H1 (cell line): ENCODE measurements at regions of chr1 and their contacts with region 1.

Region 1: GRCh38 chr1:11967028-11967547 is 13.2 kb upstream of the MFN2 start:
- DNase-seq: peak; percentile 64 to 76
- H3K4me3 ChIP-seq: no peak overlapping the region
- H3K27ac ChIP-seq: no peak overlapping the region
- H3K4me1 ChIP-seq: no peaks in the 10 kb centered on the region
- H3K27me3 ChIP-seq: no peaks in the 10 kb centered on the region
- CTCF ChIP-seq: peak; percentile 68 to 98 (median 95)
- EP300 ChIP-seq: no peak
- POLR2A ChIP-seq: no peak
- RAD21 ChIP-seq: peak; percentile 95

Region 2: GRCh38 chr1:11838349-11839272 is 128.5 kb before region 1 on chr1:
- CTCF ChIA-PET with region 1: interaction called, 16 read pairs
- POLR2A ChIA-PET with region 1: no interaction called
- DNase-seq: peak; percentile 33 to 91
- H3K4me3 ChIP-seq: no peak overlapping the region
- H3K27ac ChIP-seq: no peak overlapping the region
- H3K4me1 ChIP-seq: no peaks in the 10 kb centered on the region
- H3K27me3 ChIP-seq: no peaks in the 10 kb centered on the region
- CTCF ChIP-seq: peak; percentile 96 to 100 (median 99)
- EP300 ChIP-seq: no peak
- POLR2A ChIP-seq: no peak
- RAD21 ChIP-seq: peak; percentile 98

Region 3: DNA sequence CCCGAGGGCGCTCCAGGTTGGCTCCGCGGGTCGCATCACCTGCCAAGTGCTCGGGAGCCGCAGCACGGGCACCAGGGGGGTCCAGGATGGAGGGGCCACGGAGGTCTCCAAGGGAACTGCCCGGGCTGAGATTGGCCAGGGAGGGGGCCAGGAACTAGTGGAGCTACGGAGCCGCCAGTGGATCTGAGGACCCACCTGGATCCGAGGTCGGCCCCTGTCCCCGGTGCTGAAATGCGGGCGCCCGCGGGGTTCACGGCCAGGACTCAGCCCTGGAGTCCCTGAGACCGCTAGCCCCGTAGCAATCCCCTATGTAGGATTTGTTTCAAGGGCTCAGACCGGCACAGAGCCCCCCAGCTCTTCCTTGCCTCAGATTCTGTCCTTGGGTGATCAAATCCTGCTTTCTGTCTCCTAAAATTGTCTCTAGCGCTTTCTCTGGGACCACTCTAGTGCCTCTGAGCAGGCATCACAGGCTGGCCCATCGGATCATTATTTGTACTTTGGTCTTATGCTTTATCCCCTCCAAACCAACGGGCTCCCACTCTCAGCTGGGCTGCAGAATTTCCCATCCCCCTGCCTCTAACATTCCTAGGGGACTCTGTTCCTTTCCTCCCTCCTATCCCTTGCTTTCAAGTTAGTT is 68.1 kb before region 1 on chr1:
- CTCF ChIA-PET with region 1: interaction called, 13 read pairs
- POLR2A ChIA-PET with region 1: no interaction called
- DNase-seq: peak in 1 of 2 experiments; percentile 93
- H3K4me3 ChIP-seq: peak overlapping the region in 2 of 4 experiments; percentile 32 to 35; a peak in 1 of 8 replicates
- H3K27ac ChIP-seq: no peak overlapping the region
- H3K4me1 ChIP-seq: peaks cover 0 to 2% (median 0%) of the 10 kb centered on the region in 4 experiments; a peak in 4 of 7 replicates
- H3K27me3 ChIP-seq: peaks cover 0 to 2% (median 0%) of the 10 kb centered on the region in 4 experiments; a peak in 1 of 7 replicates
- CTCF ChIP-seq: no peak
- EP300 ChIP-seq: no peak
- POLR2A ChIP-seq: no peak
- RAD21 ChIP-seq: no peak; a peak in 1 of 4 replicates

Region 4: DNA sequence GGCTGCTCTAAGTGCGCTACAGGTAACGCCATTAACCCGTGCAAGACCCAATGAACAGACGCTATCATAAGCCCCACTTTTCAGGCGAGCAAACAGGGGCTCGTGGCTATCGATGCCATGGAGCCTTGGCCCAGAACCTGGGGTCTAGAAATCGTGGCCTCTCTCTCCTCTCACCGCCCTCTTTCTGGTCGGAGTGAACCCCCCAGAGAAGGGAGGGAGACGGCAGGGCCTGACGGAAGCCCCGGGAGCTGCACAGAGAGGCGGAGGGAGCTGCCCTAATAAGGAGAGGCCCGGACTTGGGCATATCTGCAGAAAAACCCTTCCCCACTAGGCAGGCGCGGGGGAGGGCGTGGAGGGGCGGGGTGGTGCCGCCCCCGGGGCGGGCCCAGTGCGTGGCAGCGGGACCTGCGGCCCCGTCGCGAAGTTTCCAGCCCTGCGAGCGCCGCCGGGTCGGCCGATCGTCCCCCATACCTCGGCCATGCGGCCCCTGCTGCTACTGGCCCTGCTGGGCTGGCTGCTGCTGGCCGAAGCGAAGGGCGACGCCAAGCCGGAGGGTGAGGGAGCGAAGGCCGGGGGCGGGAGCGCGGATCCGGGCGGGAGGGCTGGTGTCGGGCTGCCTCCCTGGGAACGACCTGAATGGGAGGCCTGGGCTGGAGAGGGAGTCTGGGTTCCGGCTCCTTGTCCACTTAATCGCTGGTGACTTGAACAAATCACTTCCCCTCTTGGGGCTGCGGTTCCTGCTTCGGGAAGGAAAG is 32.6 kb before region 1 on chr1 and contains the start of gene PLOD1:
- CTCF ChIA-PET with region 1: interaction called, 13 read pairs
- POLR2A ChIA-PET with region 1: interaction called, 6 read pairs
- DNase-seq: peak; percentile 36 to 85
- H3K4me3 ChIP-seq: peak within 1 kb of the TSS; percentile 48 to 66 (median 64)
- H3K27ac ChIP-seq: peak within 1 kb of the TSS; percentile 84
- H3K4me1 ChIP-seq: peaks cover 0 to 16% (median 10%) of the 10 kb centered on the region in 4 experiments; a peak in 6 of 7 replicates
- H3K27me3 ChIP-seq: no peaks in the 10 kb centered on the region
- CTCF ChIP-seq: no peak
- EP300 ChIP-seq: no peak
- POLR2A ChIP-seq: peak in 1 of 2 experiments; percentile 92; a peak in 2 of 3 replicates
- RAD21 ChIP-seq: no peak
- total RNA-seq, gene PLOD1: 44.9 and 53.4 TPM in 2 replicates

Region 5: DNA sequence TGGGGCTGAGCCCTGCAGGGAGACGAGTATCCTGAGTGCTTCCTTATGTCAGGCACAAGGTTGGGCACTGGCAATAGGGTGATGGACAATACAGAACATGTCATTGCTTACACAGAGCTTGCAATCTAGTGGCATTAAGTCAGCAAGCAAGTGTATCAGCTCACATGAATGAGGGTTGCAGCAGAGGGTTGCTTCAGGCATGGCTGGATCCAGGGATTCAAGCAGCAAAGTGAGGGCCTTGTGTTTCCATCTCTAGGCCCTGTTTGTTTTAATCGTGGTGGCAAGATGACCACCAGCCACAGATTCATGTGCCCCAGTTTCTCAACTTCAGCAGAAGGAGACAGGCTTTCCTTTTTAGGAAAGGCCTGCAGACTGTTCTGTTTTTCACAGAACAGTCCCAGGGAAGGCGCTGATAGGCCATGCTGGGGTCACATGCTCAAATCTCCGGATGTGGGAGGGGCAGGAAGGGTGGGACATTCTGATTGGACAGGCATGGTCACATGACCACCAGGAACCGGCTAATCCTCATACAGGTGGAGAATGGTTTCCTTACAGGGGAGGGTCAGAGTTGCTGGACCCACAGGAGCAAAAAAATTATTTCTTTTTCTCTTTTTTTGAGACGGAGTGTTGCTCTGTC is 18.1 kb before region 1 on chr1:
- CTCF ChIA-PET with region 1: interaction called, 12 read pairs
- POLR2A ChIA-PET with region 1: interaction called, 5 read pairs
- DNase-seq: no peak
- H3K4me3 ChIP-seq: no peak overlapping the region
- H3K27ac ChIP-seq: no peak overlapping the region
- H3K4me1 ChIP-seq: peaks cover under 1 to 9% (median 3%) of the 10 kb centered on the region in 4 experiments; a peak in 6 of 7 replicates
- H3K27me3 ChIP-seq: no peaks in the 10 kb centered on the region
- CTCF ChIP-seq: no peak
- EP300 ChIP-seq: no peak
- POLR2A ChIP-seq: no peak
- RAD21 ChIP-seq: no peak

Region 6: GRCh38 chr1:11979851-11980675 is 13.0 kb after region 1 on chr1 and contains the start of gene MFN2:
- CTCF ChIA-PET with region 1: interaction called, 21 read pairs
- POLR2A ChIA-PET with region 1: interaction called, 13 read pairs
- DNase-seq: peak; percentile 97
- H3K4me3 ChIP-seq: peak within 1 kb of the TSS; percentile 78 to 94 (median 84)
- H3K27ac ChIP-seq: peak within 1 kb of the TSS; percentile 96
- H3K4me1 ChIP-seq: peaks cover 0 to 5% (median 2%) of the 10 kb centered on the region in 4 experiments; a peak in 3 of 7 replicates
- H3K27me3 ChIP-seq: no peaks in the 10 kb centered on the region
- CTCF ChIP-seq: no peak
- EP300 ChIP-seq: 0 out of 3 replicates have a peak, but pooled peaks of 1 of the 2 experiments have one; percentile 6
- POLR2A ChIP-seq: peak; percentile 91 to 95
- RAD21 ChIP-seq: no peak
- total RNA-seq, gene MFN2: 58.2 and 62.5 TPM in 2 replicates